ENCODE measurements at regions of chr3 and their contacts with region 1.

Region 1: DNA sequence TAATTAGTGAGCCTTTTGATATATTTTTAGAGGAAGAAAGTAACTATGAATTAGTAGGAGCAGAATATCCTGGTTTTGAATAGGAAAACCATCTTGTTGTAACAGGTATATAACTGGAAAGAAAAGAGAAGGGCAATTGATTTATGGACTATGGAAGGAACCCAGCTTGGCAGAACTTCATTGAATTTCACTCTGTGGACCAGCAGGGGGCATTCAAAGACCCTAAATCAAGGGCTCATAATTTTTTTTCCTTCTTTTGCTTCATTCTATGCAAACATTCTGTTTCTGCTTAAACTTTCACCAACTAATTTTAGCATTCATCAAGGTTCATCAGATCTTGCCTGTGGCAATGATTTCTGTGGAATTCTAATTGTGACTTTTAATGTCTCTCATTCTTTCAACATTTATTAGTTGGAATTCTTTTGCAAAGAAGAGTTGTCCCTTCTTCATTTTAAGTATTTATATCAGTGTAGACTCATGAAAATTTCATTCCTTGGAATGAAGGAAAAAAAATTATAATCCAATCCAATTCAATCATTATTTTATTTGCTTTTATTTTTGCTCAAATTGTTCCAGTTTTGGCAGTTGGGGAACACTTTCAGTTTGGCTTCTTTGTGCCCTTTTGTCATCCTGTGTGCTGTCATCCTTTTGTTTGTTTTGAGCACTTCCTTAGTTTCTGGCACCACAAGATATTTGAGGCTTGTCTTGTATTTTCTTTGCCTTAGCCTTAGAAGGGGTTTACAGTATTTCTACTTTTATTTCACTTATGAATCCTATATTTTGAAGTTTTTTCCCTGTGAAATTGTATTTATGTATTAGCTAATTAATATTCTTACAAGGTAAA is 30.4 kb downstream of the NXPE3 start:
- DNase-seq: peak in 4 of 7 donors; percentile 25 to 39 (median 35)
- H3K4me3 ChIP-seq: no peak overlapping the region
- H3K27ac ChIP-seq: no peak overlapping the region
- H3K4me1 ChIP-seq: peaks cover 0 to 15% of the 10 kb centered on the region in 2 donors
- H3K27me3 ChIP-seq: no peaks in the 10 kb centered on the region
- CTCF ChIP-seq: peak; percentile 34 to 81 (median 68)
- POLR2A ChIP-seq: no peak

Region 2: GRCh38 chr3:101703169-101703568 is 106.2 kb before region 1 on chr3:
- intact Hi-C with region 1: no loop called
- DNase-seq: no peak
- H3K4me3 ChIP-seq: no peak overlapping the region
- H3K27ac ChIP-seq: no peak overlapping the region
- H3K4me1 ChIP-seq: no peaks in the 10 kb centered on the region
- H3K27me3 ChIP-seq: no peaks in the 10 kb centered on the region
- CTCF ChIP-seq: no peak
- POLR2A ChIP-seq: no peak

Region 3: GRCh38 chr3:101868534-101869464 is 59.4 kb after region 1 on chr3:
- intact Hi-C with region 1: loop called in 1 of 2 experiments (anchors 10 kb)
- DNase-seq: no peak
- H3K4me3 ChIP-seq: no peak overlapping the region
- H3K27ac ChIP-seq: no peak overlapping the region
- H3K4me1 ChIP-seq: no peaks in the 10 kb centered on the region
- H3K27me3 ChIP-seq: no peaks in the 10 kb centered on the region
- CTCF ChIP-seq: no peak
- POLR2A ChIP-seq: no peak

Region 4: DNA sequence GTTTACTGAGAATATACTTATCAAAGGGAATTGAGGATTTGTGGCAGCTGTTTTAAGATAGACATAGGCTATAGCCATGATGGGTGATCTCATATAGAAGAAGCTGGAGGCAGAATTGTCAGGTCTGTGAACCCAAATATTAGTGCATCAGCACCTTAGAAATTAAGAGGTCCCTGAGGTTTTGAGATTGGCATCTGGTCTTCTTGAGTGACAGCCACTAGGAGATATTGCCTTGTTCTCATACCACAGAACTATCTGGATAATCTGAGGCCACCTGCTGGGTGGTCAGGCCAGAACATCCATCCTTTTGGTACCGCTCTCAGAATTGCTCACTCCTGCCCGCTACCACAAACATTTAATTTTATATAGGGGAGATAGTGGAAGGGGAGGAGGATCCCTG is 414.7 kb after region 1 on chr3:
- intact Hi-C with region 1: loop called (anchors 5 kb)
- DNase-seq: no peak
- H3K4me3 ChIP-seq: no peak overlapping the region
- H3K27ac ChIP-seq: no peak overlapping the region
- H3K4me1 ChIP-seq: peaks cover 0 to 3% of the 10 kb centered on the region in 2 donors
- H3K27me3 ChIP-seq: no peaks in the 10 kb centered on the region
- CTCF ChIP-seq: peak in 4 of 6 experiments; percentile 14 to 33 (median 18)
- POLR2A ChIP-seq: no peak

Region 5: DNA sequence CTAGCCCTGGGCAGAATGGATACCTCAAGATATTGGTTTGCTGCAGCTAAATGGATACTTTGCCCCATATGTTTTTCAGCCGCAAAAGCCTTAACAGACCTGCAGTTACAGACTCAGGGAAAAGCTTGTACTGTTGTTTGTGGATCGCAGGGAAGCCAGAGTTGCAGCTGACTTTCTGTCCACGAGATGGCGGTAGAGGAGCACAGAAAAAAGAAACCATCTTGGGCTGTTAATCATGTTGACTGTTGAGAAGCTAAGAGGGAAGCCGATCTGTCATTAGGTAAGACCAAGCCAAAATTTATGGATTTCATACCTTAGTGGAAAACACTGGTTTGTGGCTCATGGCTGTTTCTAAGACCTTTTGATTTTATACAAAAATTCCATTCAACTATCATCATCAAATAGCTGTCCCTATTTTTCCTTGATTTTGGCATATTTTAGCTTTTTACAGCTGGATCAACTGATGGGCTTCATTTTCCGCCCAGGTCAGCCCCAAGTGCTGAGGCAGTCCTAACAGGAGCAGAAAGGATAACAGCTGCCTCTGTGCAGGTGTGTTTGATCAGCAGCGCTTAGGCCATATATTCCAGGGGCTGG is 419.8 kb after region 1 on chr3:
- intact Hi-C with region 1: loop called (anchors 5 kb)
- DNase-seq: peak; percentile 51 to 90 (median 69)
- H3K4me3 ChIP-seq: no peak overlapping the region
- H3K27ac ChIP-seq: no peak overlapping the region
- H3K4me1 ChIP-seq: peaks cover 0 to 3% of the 10 kb centered on the region in 2 donors
- H3K27me3 ChIP-seq: no peaks in the 10 kb centered on the region
- CTCF ChIP-seq: peak; percentile 84 to 95 (median 90)
- POLR2A ChIP-seq: no peak